ENCODE measurements at regions of chr18 and their contacts with region 1.

Region 1: DNA sequence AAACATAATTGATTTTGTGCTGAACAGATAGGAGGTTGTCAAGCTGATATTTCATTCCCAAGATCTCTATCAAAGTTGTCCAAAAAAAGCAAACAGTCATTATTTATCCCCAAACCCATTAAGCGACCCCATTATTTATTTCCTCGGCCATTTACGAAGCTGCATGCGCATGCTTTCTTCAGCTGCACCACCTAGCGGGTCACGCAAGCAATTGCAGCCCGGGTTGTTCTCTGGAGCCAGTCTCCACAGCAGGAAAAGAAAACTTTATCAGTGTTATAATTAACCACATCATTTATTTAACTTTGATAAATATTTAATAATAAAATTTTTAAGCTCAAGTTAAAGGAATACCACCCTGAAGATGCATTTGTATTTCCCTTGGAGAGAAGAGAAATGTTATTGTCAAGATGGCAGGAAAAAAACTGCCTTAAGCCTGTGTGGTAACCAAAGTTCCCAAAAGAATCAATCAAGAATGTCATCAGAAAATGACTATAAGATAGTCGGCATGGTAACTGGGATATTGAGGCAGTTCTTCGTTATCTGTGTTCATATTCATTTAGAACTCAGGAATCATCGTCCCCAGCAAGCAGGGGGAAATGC is 304.7 kb downstream of the FBXO15 start:
- DNase-seq: peak in 2 of 5 donors; percentile 6 to 14
- H3K4me3 ChIP-seq: no peak overlapping the region
- H3K4me3 Mint-ChIP-seq: peak overlapping the region; percentile 34 to 77 (median 62)
- H3K27ac ChIP-seq: no peak overlapping the region
- H3K27ac Mint-ChIP-seq: no peak overlapping the region
- H3K4me1 ChIP-seq: no peaks in the 10 kb centered on the region
- H3K4me1 Mint-ChIP-seq: peaks cover 3 to 10% (median 4%) of the 10 kb centered on the region in 4 donors
- H3K27me3 ChIP-seq: no peaks in the 10 kb centered on the region
- H3K27me3 Mint-ChIP-seq: peaks cover 0 to 3% of the 10 kb centered on the region in 2 donors

Region 2: DNA sequence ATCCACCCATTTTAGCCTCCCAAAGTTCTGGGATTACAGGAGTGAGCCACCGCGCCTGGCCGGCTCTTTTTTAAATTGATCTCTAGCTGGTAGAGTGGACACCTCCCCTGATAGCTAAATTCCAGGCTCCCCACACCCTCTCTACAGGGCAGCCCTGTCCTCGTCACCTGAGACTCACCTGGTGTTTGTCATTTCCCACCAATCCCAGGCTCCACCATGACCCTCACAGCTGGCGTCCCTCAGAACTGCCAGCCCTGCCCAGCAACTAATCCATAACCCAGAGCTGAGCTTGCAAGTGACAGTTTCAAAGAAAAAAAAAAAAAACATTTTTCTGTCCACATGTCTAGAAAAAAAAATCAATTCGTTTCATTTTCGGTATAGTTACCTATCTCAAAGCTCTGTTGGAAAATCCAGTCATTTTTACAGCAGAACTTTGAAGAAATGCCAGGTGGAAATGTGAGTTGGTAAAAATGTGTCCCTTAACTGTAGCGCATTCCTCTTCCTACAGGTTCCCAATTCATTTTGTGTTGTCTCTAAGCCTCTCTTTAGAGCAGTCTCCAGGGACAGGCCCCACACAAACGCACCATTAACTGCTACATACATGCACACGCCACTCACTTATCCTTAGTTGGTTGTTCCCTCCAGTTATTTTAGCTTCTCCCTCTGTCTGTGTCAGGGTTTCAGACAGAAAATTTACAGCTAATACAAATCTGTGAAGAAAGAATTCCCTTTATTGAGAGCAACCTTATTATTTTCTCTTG is 10.1 kb after region 1 on chr18:
- CTCF ChIA-PET with region 1: interaction called, 13 read pairs
- POLR2A ChIA-PET with region 1: no interaction called
- intact Hi-C with region 1: no loop called
- DNase-seq: no peak
- H3K4me3 ChIP-seq: no peak overlapping the region
- H3K4me3 Mint-ChIP-seq: no peak overlapping the region
- H3K27ac ChIP-seq: no peak overlapping the region
- H3K27ac Mint-ChIP-seq: no peak overlapping the region
- H3K4me1 ChIP-seq: no peaks in the 10 kb centered on the region
- H3K4me1 Mint-ChIP-seq: no peaks in the 10 kb centered on the region
- H3K27me3 ChIP-seq: no peaks in the 10 kb centered on the region
- H3K27me3 Mint-ChIP-seq: no peaks in the 10 kb centered on the region